ENCODE measurements at regions of chrX and their contacts with region 1.

Region 1: GRCh38 chrX:142702749-142703148 is 323.0 kb upstream of the SPANXN4 start:
- DNase-seq: no peak
- H3K4me3 Mint-ChIP-seq: no peak overlapping the region
- H3K27ac Mint-ChIP-seq: no peak overlapping the region
- H3K4me1 Mint-ChIP-seq: no peaks in the 10 kb centered on the region
- H3K27me3 Mint-ChIP-seq: no peaks in the 10 kb centered on the region

Region 2: DNA sequence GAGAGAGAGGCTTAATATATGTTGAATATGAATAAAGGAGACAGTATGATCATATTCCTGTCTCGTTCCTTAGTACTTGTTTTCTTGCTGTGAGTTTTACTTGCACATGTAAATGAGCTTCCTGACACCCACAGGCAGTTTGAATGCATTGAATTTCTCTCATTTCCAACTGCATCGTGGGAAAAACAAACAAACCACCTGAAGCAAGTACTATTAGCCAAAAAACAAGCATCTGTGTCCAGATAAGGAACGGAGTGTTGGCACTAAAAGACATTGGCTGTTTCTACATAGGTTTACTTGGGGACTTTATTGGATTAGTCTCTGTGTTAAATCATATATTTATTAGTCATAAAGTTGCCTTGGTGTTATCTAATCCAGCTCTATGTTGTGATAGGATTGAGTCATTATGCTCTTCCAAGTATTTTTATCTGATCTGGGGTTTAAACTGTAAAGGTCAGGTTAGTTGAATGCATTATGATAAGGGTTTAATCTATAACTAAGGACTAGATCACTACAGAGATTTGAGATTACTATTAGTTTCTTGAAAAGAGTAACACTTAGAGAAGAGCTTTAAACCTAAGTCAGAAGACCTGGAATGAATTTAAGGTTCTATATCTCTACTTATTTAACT is 16.0 kb before region 1 on chrX:
- intact Hi-C with region 1: loop called (anchors 1 kb)
- DNase-seq: no peak
- H3K4me3 Mint-ChIP-seq: no peak overlapping the region
- H3K27ac Mint-ChIP-seq: no peak overlapping the region
- H3K4me1 Mint-ChIP-seq: no peaks in the 10 kb centered on the region
- H3K27me3 Mint-ChIP-seq: no peaks in the 10 kb centered on the region

Region 3: DNA sequence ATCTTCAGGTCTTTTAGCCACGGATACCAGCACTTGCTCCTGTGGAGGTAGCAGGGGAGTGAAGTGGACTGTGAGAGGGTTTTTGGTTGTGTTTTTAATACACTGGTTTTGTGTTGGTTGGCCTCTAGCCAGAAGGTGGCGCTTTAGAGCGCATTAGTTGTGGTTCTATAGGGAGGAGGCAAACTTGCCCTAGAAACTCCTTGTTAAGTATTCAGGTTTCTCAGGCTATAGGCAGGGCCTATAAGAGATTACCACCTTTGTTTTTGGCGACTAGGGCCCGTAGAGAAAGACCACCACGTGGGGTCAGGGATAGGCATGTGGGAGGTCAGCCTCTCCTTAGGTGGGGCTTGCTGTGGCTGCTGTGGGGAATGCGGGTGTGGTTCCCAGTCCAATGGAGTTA is 101.3 kb after region 1 on chrX:
- intact Hi-C with region 1: no loop called
- DNase-seq: no peak
- H3K4me3 Mint-ChIP-seq: no peak overlapping the region
- H3K27ac Mint-ChIP-seq: no peak overlapping the region
- H3K4me1 Mint-ChIP-seq: no peaks in the 10 kb centered on the region
- H3K27me3 Mint-ChIP-seq: no peaks in the 10 kb centered on the region

Measured in activated T-helper 1 cell treated with anti-CD3 and anti-CD28 coated beads, Interleukin-12 subunit alpha, Interleukin-12 subunit beta, Interleukin-2, Interleukin-4 antibody, amounts not matched to agents 30 ng/mL and 10 ng/mL and 1 ng/mL, durations not matched to agents 14 hours and 24 hours and 36 hours (primary cell).